Mammary epithelial cell (primary cell): ENCODE measurements at regions of chr5 and their contacts with region 1.

Region 1: GRCh38 chr5:135651150-135651549 is 72.4 kb upstream of the CXCL14 start:
- DNase-seq: peak; percentile 100
- H3K4me3 ChIP-seq: no peak overlapping the region
- H3K27ac ChIP-seq: peak overlapping the region; percentile 64
- H3K4me1 ChIP-seq: peaks cover 29% of the 10 kb centered on the region
- H3K27me3 ChIP-seq: no peaks in the 10 kb centered on the region
- CTCF ChIP-seq: no peak

Region 2: GRCh38 chr5:135565725-135566421 is 85.3 kb before region 1 on chr5:
- CTCF ChIA-PET with region 1: interaction called, 6 read pairs
- dilution Hi-C with region 1: no loop called
- in situ Hi-C with region 1: no loop called
- intact Hi-C with region 1: loop called (anchors 2 kb)
- DNase-seq: peak; percentile 26
- H3K4me3 ChIP-seq: no peak overlapping the region
- H3K27ac ChIP-seq: no peak overlapping the region
- H3K4me1 ChIP-seq: peaks cover 3% of the 10 kb centered on the region
- H3K27me3 ChIP-seq: no peaks in the 10 kb centered on the region
- CTCF ChIP-seq: peak; percentile 93 to 96

Region 3: DNA sequence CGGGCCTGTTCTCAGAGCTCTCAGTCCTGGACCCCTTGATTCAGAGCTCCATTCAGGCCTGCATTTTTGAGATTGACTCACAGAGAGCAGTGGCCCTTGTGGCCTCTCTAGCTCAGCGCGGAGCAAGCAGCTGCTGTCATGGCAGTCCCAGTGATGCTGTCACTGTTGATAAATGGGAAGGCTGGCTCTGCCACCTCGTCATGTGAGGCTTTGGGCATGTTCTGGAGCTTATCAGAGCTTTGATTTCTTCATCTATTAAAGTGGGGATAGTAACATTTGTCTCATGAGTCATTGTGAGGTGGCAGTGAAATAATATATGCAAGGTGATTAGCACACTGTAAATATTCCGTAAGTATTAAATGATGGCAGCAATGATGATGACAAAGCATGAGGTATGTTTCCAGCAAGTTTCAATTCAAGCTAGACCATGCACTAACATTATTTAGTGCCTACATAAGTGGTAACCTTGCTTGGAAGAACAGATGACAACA is 54.0 kb after region 1 on chr5:
- CTCF ChIA-PET with region 1: no interaction called
- dilution Hi-C with region 1: no loop called
- in situ Hi-C with region 1: no loop called
- intact Hi-C with region 1: loop called (anchors 2 kb)
- DNase-seq: peak; percentile 91
- H3K4me3 ChIP-seq: no peak overlapping the region
- H3K27ac ChIP-seq: peak overlapping the region; percentile 59
- H3K4me1 ChIP-seq: peaks cover 34% of the 10 kb centered on the region
- H3K27me3 ChIP-seq: no peaks in the 10 kb centered on the region
- CTCF ChIP-seq: no peak